ENCODE measurements at regions of chr4 and their contacts with region 1.

Region 1: DNA sequence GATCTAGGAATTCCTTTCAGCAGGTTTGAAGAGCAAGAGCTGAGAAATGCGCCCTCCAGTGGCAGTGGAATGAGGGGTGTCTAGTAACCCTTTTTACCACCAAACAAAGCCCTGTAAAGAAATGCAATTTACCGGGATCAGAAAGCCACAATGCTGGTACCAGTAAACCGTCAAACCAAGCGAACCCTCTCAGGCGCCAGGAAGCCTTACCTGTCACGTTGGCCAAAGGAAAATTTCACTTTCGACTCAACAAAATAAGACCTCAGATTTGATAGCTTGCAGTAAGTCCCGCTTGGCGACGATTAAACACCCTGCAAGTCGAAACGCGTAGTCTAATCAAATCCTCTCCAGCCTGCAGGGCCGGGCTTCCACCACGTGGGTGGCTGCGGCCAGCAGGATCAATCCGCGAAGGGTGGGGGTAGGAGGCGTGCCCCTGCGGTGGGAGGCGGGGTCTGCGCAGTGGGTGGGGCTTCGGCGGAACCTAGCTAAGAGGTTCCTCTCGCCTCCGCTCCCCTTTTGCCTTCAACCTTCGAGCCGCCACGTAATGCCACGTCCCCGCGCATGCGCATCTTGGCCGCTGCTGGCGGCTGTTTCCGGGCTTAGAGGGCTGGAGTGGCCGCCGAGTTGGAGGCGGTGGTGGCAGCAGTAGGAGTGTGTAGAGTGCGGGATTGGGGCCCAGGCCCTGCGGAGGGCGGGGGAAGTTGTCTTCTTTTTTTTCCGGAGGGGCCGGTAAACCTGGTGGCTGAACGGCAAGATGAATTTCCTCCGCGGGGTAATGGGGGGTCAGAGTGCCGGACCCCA is at the start of gene USO1:
- DNase-seq: peak; percentile 99
- ATAC-seq: peak; percentile 95
- H3K4me3 Mint-ChIP-seq: peak within 1 kb of the TSS; percentile 91
- H3K27ac Mint-ChIP-seq: peak within 1 kb of the TSS; percentile 96
- H3K4me1 Mint-ChIP-seq: peaks cover 44% of the 10 kb centered on the region
- H3K27me3 Mint-ChIP-seq: no peaks in the 10 kb centered on the region
- CTCF ChIP-seq: peak; percentile 82
- total RNA-seq, gene USO1: 50.5 to 52.0 TPM

Region 2: DNA sequence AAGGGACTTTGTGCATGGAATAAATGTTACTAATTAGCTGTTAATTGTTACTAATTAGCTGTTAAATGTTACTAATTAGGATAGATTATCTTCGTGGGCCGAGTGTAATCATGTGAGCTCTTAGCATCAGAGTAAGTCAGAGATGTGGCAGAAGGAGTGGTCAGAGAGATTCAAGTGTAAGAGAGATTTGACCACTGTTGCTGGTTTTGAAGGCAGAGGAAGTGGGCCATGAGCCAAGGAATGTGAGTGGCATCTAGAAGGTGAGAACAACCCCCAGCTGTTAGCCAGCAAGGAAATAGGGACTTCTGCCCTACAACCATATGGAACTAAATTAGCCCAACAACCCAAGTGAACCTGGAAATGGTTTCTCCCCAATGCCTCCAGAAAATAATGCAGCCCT is 140.2 kb before region 1 on chr4:
- CTCF ChIA-PET with region 1: interaction called, 12 read pairs
- POLR2A ChIA-PET with region 1: no interaction called
- intact Hi-C with region 1: no loop called
- DNase-seq: no peak
- ATAC-seq: no peak
- H3K4me3 Mint-ChIP-seq: no peak overlapping the region
- H3K27ac Mint-ChIP-seq: no peak overlapping the region
- H3K4me1 Mint-ChIP-seq: no peaks in the 10 kb centered on the region
- H3K27me3 Mint-ChIP-seq: peaks cover 4% of the 10 kb centered on the region
- CTCF ChIP-seq: no peak

Region 3: GRCh38 chr4:75673027-75673958 is 51.0 kb before region 1 on chr4 and contains the start of gene G3BP2:
- CTCF ChIA-PET with region 1: interaction called, 36 read pairs
- POLR2A ChIA-PET with region 1: interaction called, 50 read pairs
- intact Hi-C with region 1: loop called (anchors 1 kb)
- DNase-seq: peak; percentile 99
- ATAC-seq: peak; percentile 93
- H3K4me3 Mint-ChIP-seq: peak within 1 kb of the TSS; percentile 95
- H3K27ac Mint-ChIP-seq: peak within 1 kb of the TSS; percentile 99
- H3K4me1 Mint-ChIP-seq: peaks cover 32% of the 10 kb centered on the region
- H3K27me3 Mint-ChIP-seq: no peaks in the 10 kb centered on the region
- CTCF ChIP-seq: no peak
- total RNA-seq, gene G3BP2: 185 to 197 TPM

Region 4: GRCh38 chr4:75708218-75708691 is 16.0 kb before region 1 on chr4:
- CTCF ChIA-PET with region 1: interaction called, 38 read pairs
- POLR2A ChIA-PET with region 1: interaction called, 10 read pairs
- intact Hi-C with region 1: no loop called
- DNase-seq: peak; percentile 75
- ATAC-seq: peak; percentile 96
- H3K4me3 Mint-ChIP-seq: no peak overlapping the region
- H3K27ac Mint-ChIP-seq: peak overlapping the region; percentile 40
- H3K4me1 Mint-ChIP-seq: peaks cover 5% of the 10 kb centered on the region
- H3K27me3 Mint-ChIP-seq: no peaks in the 10 kb centered on the region
- CTCF ChIP-seq: peak; percentile 63

Region 5: GRCh38 chr4:75858721-75859120 is 134.5 kb after region 1 on chr4:
- CTCF ChIA-PET with region 1: no interaction called
- POLR2A ChIA-PET with region 1: no interaction called
- intact Hi-C with region 1: no loop called
- DNase-seq: no peak
- ATAC-seq: no peak
- H3K4me3 Mint-ChIP-seq: no peak overlapping the region
- H3K27ac Mint-ChIP-seq: no peak overlapping the region
- H3K4me1 Mint-ChIP-seq: no peaks in the 10 kb centered on the region
- H3K27me3 Mint-ChIP-seq: no peaks in the 10 kb centered on the region
- CTCF ChIP-seq: no peak